ENCODE measurements at regions of chr6 and their contacts with region 1.

Region 1: DNA sequence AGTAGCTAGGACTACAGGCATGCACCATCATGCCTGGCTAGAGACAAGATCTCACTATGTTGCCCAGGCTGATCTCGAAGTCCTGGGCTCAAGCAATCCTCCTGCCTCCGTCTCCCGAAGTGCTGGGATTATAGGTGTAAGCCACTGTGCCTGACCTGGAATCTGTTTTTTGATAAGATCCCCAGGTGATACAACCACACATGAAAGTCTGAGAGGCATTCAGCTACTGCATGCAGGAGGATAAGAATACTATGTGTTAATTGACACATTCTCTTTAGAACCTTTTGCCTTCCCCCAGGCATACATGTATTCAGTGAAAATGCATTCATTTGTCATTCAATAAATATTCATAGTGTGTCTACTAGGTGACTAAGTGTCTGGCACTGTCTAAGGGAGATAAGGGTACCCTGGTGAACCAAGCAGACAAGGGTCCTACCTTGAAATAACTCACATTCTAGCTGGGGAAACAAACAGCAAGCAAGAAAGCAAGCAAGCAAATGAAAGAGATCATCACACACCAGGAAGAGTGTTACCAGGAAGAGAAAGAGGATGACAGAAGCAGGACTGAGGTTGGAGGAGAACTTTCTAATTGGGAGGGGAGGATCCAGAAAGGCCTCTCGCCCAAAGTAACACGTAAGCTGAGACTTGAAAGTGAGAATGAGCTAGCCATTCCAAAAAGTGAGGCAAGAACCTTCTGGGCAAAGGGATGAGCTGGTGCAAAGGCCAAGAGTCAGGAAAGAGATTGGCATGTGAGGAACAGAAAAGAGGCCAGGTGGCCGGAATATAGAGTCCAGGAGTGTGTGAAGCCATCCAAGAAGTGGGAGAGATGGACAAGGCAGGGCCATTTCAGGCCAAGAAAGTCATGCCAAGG is 6.5 kb downstream of the GFOD1 start:
- DNase-seq: no peak
- ATAC-seq: peak; percentile 52 to 89 (median 84)
- H3K4me3 ChIP-seq: peak overlapping the region; percentile 3
- H3K27ac ChIP-seq: peak overlapping the region; percentile 78
- H3K4me1 ChIP-seq: peaks cover 64% of the 10 kb centered on the region
- H3K27me3 ChIP-seq: no peaks in the 10 kb centered on the region
- CTCF ChIP-seq: no peak

Region 2: DNA sequence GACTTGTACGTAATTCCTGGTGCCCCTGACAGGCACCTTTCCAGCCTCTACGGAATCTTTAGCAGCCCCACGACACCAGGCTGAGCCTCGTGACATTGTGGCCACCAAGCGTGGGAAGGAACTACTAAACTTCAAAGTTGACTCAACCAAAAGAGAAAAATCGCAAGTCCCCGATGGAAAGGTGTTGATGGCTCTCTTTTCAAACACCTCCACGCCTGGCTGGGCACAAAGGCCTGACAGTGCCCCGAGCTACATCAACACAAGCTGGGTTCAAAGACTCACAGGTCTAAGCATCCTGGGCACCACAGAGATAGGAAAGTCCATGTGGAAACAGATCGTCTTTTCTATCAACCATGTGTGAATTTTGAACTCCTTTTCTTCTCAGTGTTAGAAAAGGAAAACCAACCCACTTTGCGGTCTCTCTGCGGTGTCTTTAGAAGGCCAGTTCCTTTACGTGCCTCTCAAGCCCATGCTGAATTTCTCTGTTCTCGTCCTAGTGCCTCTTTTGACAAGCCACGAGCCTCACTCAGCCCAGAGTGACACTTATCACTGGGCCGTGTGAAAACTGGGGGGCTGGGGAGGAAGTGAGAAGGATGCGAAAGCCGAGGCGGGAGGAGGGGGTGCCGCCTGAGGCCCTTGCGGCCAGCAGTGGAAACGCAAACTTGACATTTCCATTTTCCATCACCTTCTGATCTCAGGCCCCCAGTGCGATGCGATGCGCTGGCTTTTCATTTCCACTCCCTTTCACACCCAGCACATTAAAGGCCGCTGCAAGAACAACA is 52.9 kb before region 1 on chr6:
- intact Hi-C with region 1: loop called in 1 of 2 experiments (anchors 5 kb)
- DNase-seq: no peak
- ATAC-seq: no peak
- H3K4me3 ChIP-seq: no peak overlapping the region
- H3K27ac ChIP-seq: peak overlapping the region; percentile 11
- H3K4me1 ChIP-seq: peaks cover 57% of the 10 kb centered on the region
- H3K27me3 ChIP-seq: no peaks in the 10 kb centered on the region
- CTCF ChIP-seq: no peak

Region 3: DNA sequence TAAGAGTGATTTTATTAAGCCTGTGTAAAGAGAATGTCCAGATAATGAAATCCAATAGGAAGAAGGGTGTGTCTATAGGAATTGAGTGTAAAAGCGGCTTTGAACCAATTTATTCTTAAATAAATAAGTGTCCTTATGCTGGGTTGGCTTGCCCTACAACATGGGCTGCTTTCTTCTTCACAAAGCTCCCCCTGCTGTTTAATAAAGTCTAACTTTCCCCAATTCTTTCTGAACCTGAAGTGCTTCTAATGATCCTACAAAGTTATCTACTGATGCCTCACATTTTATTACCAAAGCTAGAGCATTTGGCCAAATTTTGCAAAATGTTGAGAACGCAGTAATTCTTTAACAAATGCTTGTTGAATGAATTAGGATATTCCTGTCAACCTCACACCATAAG is 57.2 kb after region 1 on chr6:
- intact Hi-C with region 1: no loop called
- DNase-seq: no peak
- ATAC-seq: peak; percentile 70 to 92 (median 78)
- H3K4me3 ChIP-seq: no peak overlapping the region
- H3K27ac ChIP-seq: no peak overlapping the region
- H3K4me1 ChIP-seq: no peaks in the 10 kb centered on the region
- H3K27me3 ChIP-seq: no peaks in the 10 kb centered on the region
- CTCF ChIP-seq: peak; percentile 62